HEK293T (cell line): ENCODE measurements at regions of chr7 and their contacts with region 1.

Region 1: DNA sequence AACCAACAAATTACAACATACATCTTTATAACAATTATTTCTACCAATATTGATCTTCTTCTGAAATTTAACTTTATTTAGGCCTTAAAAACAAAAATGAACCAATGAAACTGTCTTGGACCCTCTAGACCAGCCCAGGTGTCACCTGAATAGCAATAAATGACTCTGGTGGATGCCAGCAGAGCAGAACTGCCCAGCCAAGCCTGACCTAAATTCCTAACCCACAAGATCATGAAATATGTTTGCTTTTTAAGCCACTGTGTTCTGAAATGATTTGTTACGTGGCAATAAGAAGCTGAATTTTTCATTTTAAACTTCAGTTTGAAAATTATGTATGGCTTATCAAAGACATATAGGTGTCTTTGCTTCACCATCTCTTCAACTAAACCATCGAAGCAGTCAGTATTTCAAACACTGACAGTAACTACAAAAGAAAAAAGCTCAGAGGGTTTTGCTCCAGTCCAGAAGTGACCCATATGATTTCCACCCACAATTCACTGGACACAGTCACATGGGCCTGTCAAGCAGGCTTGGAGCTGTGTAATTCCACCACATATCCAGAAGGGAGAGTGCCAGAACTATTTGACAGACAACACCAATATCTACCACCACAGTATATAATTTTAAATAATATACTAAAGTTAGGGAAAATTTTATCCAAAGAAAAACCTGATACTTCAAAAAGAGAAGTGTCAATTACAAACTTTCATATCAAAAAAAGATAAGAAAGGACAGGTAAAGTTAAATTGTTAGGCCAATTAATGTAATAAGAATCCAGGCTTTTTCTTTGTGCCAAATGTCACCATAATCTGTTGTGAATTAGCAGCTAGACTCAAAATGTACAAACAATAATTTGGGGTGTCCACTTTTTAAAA is 94.5 kb downstream of the KMT2C start:
- DNase-seq: peak; percentile 76

Region 2: DNA sequence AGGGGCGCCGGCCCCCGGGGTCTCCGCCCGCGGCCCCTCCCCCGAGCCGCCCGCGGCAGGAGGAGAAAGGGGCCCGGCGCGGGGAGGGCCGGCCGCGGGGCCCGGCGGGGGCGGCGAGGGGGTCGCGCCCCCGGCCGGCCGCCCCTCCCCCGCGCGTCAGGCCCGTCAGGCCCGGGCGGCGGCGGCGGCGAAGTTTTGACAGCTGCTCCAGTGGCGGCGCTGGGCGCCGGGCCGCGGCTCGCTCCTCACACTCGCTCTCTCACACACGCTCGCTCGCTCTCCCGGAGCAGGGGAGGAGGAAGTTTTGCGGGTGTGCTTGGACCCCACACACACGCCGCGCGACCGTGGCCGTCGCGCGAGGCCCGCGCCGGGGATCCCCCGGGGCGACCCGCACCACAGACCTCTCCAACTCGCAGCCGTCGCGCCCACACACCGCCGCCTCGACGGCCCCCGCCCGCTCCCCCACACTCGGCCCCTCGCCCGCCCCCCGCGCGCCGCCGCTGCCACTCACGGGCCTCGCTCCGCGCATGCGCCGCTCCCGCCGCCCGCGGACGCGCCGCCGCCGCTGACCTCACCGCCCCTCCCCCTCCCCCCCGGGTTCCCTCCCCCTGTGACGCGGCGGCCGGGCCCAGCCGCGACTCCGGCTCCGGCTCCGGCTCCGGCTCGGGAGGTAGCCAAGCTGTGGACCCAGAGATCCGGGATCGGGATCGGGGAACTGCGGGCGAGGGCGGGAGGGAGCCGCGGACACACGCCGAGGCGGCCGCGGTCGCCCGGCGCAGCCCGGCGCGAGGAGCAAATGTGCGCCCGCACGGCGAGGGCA is 95.0 kb after region 1 on chr7:
- CTCF ChIA-PET with region 1: interaction called, 10 read pairs
- POLR2A ChIA-PET with region 1: interaction called, 5 read pairs
- DNase-seq: peak; percentile 95

Region 3: GRCh38 chr7:152489044-152489443 is 147.8 kb after region 1 on chr7:
- CTCF ChIA-PET with region 1: interaction called, 10 read pairs
- POLR2A ChIA-PET with region 1: no interaction called
- DNase-seq: no peak

Region 4: GRCh38 chr7:152568972-152569371 is 227.7 kb after region 1 on chr7:
- CTCF ChIA-PET with region 1: no interaction called
- POLR2A ChIA-PET with region 1: no interaction called
- DNase-seq: no peak

Region 5: DNA sequence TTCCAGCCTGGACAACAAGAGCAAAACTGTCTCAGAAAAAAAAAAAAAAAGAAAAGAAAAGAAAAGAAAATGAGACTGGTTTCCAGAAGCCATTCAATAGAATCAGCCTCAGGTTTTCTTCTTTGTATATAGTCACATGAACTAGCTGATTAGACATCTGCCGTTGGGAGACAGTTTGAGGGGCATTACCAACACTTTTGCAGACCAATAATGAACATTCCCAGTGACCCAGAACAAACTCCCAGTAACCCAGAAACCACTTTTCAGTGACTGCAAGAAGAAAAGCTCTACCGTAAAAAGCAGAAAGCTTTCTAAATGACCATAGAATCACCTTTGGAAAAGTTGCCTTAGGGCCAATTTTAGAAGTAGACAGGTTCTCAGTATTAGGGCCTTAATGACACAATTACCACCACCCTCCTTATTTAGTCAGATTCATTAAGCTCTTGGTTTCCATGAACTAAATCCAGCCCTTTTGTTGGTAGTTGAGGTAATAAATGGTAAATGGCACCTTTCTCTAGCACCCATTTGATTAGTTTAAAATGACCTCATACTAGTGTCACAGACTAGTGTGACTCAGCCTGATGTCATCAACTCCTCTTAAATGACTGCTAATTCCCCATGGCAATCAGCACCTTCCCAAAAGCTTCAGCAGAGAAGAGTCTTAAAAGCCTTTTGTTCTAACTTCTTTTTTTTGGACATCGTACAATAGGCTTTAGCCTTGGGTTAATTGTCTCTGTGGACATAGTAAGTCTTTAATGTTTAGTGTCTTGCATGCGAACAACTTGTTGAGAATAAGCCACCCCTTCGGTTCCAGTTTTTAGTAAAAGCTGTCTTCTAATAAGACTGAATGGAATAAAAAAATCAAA is 368.2 kb after region 1 on chr7:
- CTCF ChIA-PET with region 1: interaction called, 13 read pairs
- POLR2A ChIA-PET with region 1: no interaction called
- DNase-seq: no peak